Activated CD4-positive, alpha-beta T cell treated with anti-CD3 and anti-CD28 coated beads, Interleukin-2, amount 10 ng/mL, durations not matched to agents 24 days and 14 days (primary cell): ENCODE measurements at regions of chr1 and their contacts with region 1.

Region 1: GRCh38 chr1:91555821-91556531 is 55.3 kb downstream of the CDC7 start:
- DNase-seq: peak; percentile 93
- H3K4me3 Mint-ChIP-seq: peak overlapping the region; percentile 61
- H3K27ac Mint-ChIP-seq: peak overlapping the region; percentile 91
- H3K4me1 Mint-ChIP-seq: peaks cover 85% of the 10 kb centered on the region
- H3K27me3 Mint-ChIP-seq: no peaks in the 10 kb centered on the region

Region 2: DNA sequence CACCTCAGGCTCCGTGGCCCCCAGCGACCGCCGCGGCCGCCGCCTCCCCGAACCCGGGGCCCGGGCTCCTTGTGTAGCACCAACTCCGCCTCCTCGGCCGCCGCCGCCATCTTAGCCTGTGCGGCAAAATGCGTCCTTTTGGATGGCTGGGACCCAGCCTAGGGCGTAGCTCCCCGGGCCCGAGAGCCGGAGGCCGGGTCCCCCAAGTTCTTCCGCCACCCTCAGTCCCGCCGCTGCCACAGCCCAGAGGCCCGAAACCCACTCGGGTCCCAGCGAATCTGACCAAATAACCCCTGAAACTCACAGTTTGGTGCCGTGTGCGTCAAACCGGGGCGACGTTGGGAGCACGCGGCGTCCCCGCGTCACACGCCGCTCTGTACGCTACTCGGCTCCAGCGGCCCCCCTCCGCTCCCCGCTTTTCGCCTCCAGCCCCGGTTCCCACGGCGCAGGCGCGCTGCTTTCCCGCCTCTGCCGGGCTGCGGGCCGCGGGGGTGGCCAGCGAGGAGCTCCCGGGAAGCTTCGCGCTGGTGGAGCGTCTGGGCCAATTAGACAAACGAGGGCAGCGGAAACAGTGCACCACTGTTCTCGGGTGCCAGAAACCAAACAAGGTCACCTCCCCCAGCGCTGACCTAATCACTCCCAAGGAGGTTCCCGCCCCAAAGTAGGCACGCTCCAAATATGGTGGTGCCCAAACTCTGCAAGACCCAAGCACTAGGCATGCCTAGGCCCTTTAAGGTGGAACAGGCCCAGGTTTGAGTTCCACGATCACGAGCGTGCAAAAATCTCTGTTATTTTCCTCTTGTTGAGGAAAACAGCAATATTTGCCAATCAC is 534.1 kb before region 1 on chr1 and contains the start of gene ZNF644:
- intact Hi-C with region 1: loop called (anchors 5 kb)
- DNase-seq: peak; percentile 96
- H3K4me3 Mint-ChIP-seq: peak within 1 kb of the TSS; percentile 96
- H3K27ac Mint-ChIP-seq: peak within 1 kb of the TSS; percentile 100
- H3K4me1 Mint-ChIP-seq: peaks cover 42% of the 10 kb centered on the region
- H3K27me3 Mint-ChIP-seq: peaks cover under 1% of the 10 kb centered on the region
- total RNA-seq, gene ZNF644: 57.0 and 57.7 TPM in 2 replicates

Region 3: GRCh38 chr1:91591175-91591968 is 35.4 kb after region 1 on chr1:
- intact Hi-C with region 1: loop called (anchors 2 kb)
- DNase-seq: peak; percentile 66
- H3K4me3 Mint-ChIP-seq: peak overlapping the region; percentile 76
- H3K27ac Mint-ChIP-seq: peak overlapping the region; percentile 85
- H3K4me1 Mint-ChIP-seq: peaks cover 29% of the 10 kb centered on the region
- H3K27me3 Mint-ChIP-seq: peaks cover 2% of the 10 kb centered on the region

Region 4: DNA sequence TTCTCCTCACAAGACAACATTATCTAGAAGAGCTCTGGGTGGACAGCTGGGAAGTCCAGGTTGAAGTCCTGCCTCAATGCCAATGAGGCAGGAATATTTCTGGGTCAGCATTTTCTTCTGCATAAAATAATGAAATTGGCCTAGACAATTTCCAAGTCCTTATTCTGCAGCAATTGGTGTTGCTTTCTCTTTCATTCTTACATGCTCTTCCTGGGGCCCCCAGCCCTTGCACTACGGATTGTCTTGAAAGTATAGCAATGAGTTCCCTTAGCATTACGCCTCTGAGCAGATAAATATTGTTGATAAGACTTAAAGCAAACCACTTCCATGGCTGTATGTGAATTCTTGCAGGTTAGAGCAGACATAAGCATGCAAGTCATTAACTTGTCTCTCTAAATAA is 141.4 kb after region 1 on chr1:
- intact Hi-C with region 1: loop called (anchors 1 kb)
- DNase-seq: peak; percentile 90
- H3K4me3 Mint-ChIP-seq: peak overlapping the region; percentile 74
- H3K27ac Mint-ChIP-seq: peak overlapping the region; percentile 76
- H3K4me1 Mint-ChIP-seq: peaks cover 30% of the 10 kb centered on the region
- H3K27me3 Mint-ChIP-seq: no peaks in the 10 kb centered on the region

Region 5: GRCh38 chr1:91718877-91719276 is 162.9 kb after region 1 on chr1:
- intact Hi-C with region 1: no loop called
- DNase-seq: no peak
- H3K4me3 Mint-ChIP-seq: no peak overlapping the region
- H3K27ac Mint-ChIP-seq: no peak overlapping the region
- H3K4me1 Mint-ChIP-seq: peaks cover 5% of the 10 kb centered on the region
- H3K27me3 Mint-ChIP-seq: no peaks in the 10 kb centered on the region

Region 6: GRCh38 chr1:91754348-91754747 is 198.4 kb after region 1 on chr1:
- intact Hi-C with region 1: loop called (anchors 1 kb)
- DNase-seq: peak; percentile 71
- H3K4me3 Mint-ChIP-seq: peak overlapping the region; percentile 15
- H3K27ac Mint-ChIP-seq: peak overlapping the region; percentile 85
- H3K4me1 Mint-ChIP-seq: peaks cover 34% of the 10 kb centered on the region
- H3K27me3 Mint-ChIP-seq: peaks cover 4% of the 10 kb centered on the region

Region 7: DNA sequence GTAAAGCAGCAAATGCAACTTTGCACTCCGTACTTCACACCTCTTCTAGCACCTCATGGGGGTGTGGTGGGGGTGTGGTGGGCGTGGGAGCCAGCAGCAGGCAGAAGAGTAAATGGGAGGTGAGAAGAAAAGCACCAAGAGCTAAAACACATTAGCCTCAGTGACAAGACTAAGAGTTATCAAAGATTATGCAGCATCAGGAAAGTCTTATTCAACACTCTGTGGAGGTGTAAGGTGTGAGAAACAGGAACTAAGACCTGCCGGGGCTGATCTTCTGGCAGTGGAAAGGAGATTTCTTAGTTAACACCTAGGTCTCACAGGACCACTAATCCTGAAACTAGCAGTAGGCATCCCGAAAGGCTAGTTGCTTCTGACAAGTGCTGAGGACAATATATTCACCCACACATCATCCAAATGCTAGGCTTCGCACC is 320.1 kb after region 1 on chr1:
- intact Hi-C with region 1: loop called (anchors 1 kb)
- DNase-seq: no peak
- H3K4me3 Mint-ChIP-seq: peak overlapping the region; percentile 44
- H3K27ac Mint-ChIP-seq: peak overlapping the region; percentile 13
- H3K4me1 Mint-ChIP-seq: peaks cover 58% of the 10 kb centered on the region
- H3K27me3 Mint-ChIP-seq: peaks cover 12% of the 10 kb centered on the region

Region 8: DNA sequence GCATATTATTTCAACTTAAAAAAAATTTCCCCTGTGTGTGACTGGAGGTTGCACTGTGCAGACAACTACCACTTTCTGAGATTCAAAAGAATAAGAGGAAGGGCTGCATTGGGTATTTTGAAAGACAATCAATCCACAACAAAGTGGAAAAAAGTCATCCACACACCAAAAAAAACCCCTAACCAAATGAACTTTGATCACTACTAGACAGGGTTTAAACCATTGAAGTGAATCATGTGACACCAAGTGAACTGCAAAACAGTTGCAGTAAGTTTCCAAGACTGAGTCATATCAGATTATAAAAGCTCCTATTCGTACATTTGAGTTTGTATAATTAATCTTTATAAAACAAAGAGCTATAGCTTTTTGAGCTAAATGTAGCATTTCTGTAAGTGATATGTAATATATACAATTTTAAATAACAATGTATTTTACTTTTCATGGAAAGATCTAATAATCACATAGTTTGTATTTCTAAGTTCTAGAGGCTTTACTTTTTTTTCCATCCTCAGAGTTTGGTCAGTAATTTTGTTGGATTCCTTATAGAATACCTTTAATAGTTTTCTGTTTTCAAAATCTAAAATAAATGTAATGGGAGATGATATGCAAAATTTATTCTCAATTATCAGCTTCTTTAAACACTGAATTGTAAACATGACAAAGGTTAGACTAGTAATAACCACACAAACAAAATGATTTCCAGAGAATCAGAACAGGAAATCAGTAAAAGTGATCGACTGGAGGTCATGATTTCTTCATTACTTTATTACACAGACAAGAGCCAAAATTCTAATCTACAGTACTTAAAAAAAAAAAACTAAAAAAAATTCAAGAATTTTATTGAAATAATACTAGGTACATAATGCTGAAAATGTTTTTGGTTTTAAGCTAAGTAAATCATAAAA is 981.3 kb after region 1 on chr1:
- intact Hi-C with region 1: loop called (anchors 10 kb)
- DNase-seq: peak; percentile 87
- H3K4me3 Mint-ChIP-seq: peak overlapping the region; percentile 64
- H3K27ac Mint-ChIP-seq: peak overlapping the region; percentile 91
- H3K4me1 Mint-ChIP-seq: peaks cover 72% of the 10 kb centered on the region
- H3K27me3 Mint-ChIP-seq: no peaks in the 10 kb centered on the region